GM10248 (cell line): ENCODE measurements at regions of chr1 and their contacts with region 1.

Region 1: GRCh38 chr1:74485622-74486021 is 26.8 kb downstream of the LRRC53 start:
- DNase-seq: no peak
- CTCF ChIP-seq: no peak

Region 2: DNA sequence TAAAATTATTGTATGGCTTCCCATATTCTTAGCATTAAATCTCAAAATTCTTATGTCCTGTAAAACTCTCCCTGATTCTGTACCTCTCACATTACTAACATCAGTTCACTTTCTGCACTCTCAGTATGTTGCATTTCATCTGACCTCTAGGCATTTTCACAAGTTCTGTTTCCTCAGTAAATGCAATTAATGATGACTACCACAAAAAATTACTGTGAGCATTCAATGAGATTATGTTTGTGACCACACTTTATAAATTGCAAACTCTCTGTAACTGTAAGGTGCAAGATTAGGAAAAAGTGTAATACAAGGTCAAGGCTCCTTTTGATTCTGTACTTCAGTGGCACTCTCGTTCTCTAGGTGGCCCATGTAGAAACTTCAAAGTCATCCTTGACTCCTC is 33.6 kb before region 1 on chr1:
- CTCF ChIA-PET with region 1: no interaction called
- POLR2A ChIA-PET with region 1: no interaction called
- DNase-seq: no peak
- CTCF ChIP-seq: no peak

Region 3: GRCh38 chr1:74468982-74469603 is 16.5 kb before region 1 on chr1:
- CTCF ChIA-PET with region 1: interaction called, 17 read pairs
- POLR2A ChIA-PET with region 1: no interaction called
- DNase-seq: peak; percentile 18
- CTCF ChIP-seq: peak; percentile 53

Region 4: GRCh38 chr1:74504125-74504932 is 18.7 kb after region 1 on chr1:
- CTCF ChIA-PET with region 1: interaction called, 48 read pairs
- POLR2A ChIA-PET with region 1: no interaction called
- DNase-seq: peak; percentile 49
- CTCF ChIP-seq: peak; percentile 85